CD4-positive, alpha-beta T cell (primary cell): ENCODE measurements at regions of chr3 and their contacts with region 1.

Region 1: DNA sequence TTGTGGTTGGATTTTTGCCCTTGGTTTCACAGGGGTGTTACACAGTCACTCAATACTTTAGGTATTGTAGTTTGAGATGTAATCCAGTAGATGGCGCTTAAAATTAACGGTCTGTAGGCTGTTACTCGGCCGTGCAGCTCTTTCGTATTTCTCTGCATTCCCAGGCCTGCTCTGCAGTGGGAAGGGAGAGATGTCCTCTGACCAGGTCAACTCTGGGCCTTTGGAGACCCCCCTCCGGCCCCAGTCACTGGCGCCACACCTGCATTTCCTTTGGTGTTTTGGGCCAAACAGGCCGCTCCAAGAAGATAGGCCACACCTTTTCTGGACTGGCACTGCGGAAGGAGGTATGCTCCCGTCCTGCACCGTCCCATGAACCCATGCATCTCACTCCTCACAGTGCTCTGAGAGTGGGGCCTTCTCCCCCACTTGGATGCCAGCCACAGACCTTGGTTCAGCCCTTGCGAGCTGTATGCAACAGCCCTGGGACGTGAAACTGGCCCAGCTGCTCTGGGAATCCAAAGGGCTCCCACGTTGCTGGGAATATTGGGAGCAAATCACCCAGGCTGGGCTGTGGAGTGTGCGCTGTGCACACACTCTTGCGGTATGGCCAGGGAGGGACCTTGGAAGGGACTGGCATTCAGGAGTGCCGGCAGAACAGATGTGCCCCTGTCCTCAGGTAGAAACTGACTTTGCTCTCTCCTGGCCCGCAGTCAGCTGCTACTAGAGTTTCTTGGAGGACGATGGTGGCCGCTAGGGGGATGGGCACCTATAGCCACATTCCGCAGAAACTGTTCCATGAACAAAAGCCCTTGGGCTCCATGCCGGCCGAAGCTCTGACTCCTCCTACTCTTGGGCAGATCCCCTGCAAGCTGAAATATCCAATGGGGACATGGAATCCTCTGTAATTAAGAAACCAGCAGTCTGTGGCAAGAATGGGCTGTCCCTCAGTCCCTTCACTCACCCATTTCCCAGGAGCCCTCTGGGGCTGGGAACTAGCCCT is 410.5 kb upstream of the CADM2 start:
- DNase-seq: peak in 2 of 14 experiments; percentile 2 to 4
- ATAC-seq: no peak
- H3K4me3 ChIP-seq: no peak overlapping the region
- H3K4me3 Mint-ChIP-seq: no peak overlapping the region
- H3K27ac ChIP-seq: no peak overlapping the region
- H3K27ac Mint-ChIP-seq: no peak overlapping the region
- H3K4me1 ChIP-seq: no peaks in the 10 kb centered on the region
- H3K4me1 Mint-ChIP-seq: no peaks in the 10 kb centered on the region
- H3K27me3 ChIP-seq: no peaks in the 10 kb centered on the region
- H3K27me3 Mint-ChIP-seq: no peaks in the 10 kb centered on the region
- CTCF ChIP-seq: no peak

Region 2: GRCh38 chr3:83934312-83935150 is 613.7 kb before region 1 on chr3:
- CTCF ChIA-PET with region 1: no interaction called
- POLR2A ChIA-PET with region 1: no interaction called
- intact Hi-C with region 1: no loop called
- DNase-seq: no peak
- ATAC-seq: no peak
- H3K4me3 ChIP-seq: no peak overlapping the region
- H3K4me3 Mint-ChIP-seq: no peak overlapping the region
- H3K27ac ChIP-seq: no peak overlapping the region
- H3K27ac Mint-ChIP-seq: no peak overlapping the region
- H3K4me1 ChIP-seq: no peaks in the 10 kb centered on the region
- H3K4me1 Mint-ChIP-seq: no peaks in the 10 kb centered on the region
- H3K27me3 ChIP-seq: no peaks in the 10 kb centered on the region
- H3K27me3 Mint-ChIP-seq: no peaks in the 10 kb centered on the region
- CTCF ChIP-seq: no peak

Region 3: GRCh38 chr3:85576091-85576690 is 1027.9 kb after region 1 on chr3:
- CTCF ChIA-PET with region 1: no interaction called
- POLR2A ChIA-PET with region 1: no interaction called
- intact Hi-C with region 1: loop called in 1 of 2 experiments (anchors 5 kb)
- DNase-seq: peak in 11 of 14 experiments; percentile 1 to 50 (median 11)
- ATAC-seq: no peak
- H3K4me3 ChIP-seq: no peak overlapping the region
- H3K4me3 Mint-ChIP-seq: no peak overlapping the region
- H3K27ac ChIP-seq: no peak overlapping the region
- H3K27ac Mint-ChIP-seq: no peak overlapping the region
- H3K4me1 ChIP-seq: no peaks in the 10 kb centered on the region
- H3K4me1 Mint-ChIP-seq: no peaks in the 10 kb centered on the region
- H3K27me3 ChIP-seq: no peaks in the 10 kb centered on the region
- H3K27me3 Mint-ChIP-seq: no peaks in the 10 kb centered on the region
- CTCF ChIP-seq: peak; percentile 76